Activated CD4-positive, alpha-beta memory T cell treated with anti-CD3 and anti-CD28 coated beads for 36 hours (primary cell): ENCODE measurements at regions of chr6 and their contacts with region 1.

Region 1: GRCh38 chr6:45377554-45378333 is at the start of gene SUPT3H:
- DNase-seq: peak; percentile 96
- H3K4me3 Mint-ChIP-seq: peak within 1 kb of the TSS; percentile 94
- H3K27ac Mint-ChIP-seq: peak within 1 kb of the TSS; percentile 97
- H3K4me1 Mint-ChIP-seq: peaks cover 27% of the 10 kb centered on the region
- H3K27me3 Mint-ChIP-seq: no peaks in the 10 kb centered on the region
- total RNA-seq, gene SUPT3H: 17.4 to 18.2 TPM

Region 2: DNA sequence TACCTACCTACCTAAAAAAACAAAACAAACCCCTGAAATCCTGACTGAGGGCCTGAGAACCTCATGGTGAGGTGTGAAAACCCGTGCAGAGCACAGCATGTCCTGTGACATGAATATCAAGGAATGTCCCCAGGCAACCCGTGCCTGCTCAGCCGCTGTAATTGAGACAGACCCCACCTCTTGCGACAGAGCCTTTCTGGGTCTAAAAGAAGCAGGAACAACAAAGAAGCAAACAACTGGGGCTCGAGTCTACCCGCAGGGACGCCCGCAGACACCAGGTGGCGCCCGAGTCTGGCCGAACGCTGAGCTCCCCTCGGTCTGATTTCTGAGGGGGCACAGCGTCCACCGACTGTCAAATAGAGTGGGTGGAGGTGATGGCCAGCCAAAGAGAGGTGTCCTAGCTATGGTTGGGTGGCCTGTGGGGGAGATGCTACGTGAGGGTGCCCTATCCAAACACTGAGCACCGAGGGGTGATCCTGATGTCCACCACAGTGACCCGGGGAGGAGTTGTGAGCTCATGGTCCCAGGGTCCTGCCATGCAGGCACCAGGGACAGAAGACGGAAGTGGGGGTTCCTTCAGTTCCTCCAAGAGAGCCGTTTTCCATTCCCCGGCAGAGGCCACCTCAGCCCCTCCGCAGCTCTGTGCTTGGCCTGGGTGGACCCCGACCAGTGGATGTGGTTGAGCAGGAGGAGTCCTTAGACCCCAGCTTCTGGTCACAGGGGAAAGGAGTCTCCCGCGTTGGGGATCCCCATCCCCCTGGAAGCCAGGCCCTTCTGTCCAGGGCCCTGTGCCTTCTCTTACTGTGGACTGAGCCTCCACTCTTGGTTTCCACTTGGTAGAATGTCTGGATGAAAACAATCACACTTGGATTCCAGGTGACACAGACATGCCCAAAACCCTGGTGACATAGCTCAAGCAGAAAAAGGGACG is 722.1 kb before region 1 on chr6:
- CTCF ChIA-PET with region 1: interaction called, 9 read pairs
- POLR2A ChIA-PET with region 1: no interaction called
- intact Hi-C with region 1: loop called (anchors 5 kb)
- DNase-seq: peak; percentile 85
- H3K4me3 Mint-ChIP-seq: peak overlapping the region; percentile 24
- H3K27ac Mint-ChIP-seq: peak overlapping the region; percentile 76
- H3K4me1 Mint-ChIP-seq: peaks cover 9% of the 10 kb centered on the region
- H3K27me3 Mint-ChIP-seq: no peaks in the 10 kb centered on the region

Region 3: DNA sequence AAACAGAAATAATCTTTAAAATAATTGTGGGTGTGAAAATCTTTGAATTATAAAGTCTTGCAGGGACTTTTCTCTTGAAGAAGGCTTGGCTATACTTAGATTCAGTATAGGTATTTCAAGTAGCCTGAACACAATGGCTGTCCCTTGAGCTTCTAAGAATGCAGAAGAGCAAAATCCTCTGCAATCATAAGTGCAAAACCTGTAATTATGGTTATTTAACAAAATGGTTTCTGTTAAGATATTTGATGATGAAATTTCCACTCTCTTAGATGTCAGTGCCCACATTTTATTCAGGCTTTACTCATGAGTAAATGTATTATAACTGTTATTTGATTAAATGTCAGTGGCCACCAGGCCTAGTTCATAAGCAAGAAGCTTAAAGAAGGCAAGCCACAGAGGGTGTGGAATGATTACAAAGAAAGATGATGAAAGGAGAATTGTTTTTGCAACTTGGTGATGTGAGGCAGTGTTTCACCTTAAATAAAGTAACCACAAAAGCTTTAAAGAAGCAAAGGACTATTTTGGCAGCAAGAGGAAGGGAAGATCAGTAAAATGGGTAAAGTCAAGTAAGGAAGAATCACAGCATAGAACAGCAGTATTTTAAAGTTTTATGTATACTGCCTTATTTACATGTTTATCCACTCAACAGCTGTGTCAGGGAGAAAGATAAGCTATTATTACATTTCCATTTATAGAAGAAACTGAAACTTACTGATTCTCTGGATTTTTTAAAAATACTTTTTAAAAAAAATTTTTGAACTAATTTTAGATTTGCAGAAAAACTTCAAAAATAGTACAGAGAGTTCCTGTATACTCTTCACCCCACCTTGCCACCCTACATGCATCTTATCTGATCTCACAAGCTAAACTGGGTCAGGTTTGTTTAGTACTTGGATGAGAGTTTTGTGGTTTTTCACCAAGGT is 400.8 kb before region 1 on chr6:
- CTCF ChIA-PET with region 1: no interaction called
- POLR2A ChIA-PET with region 1: interaction called, 3 read pairs
- intact Hi-C with region 1: loop called (anchors 2 kb)
- DNase-seq: no peak
- H3K4me3 Mint-ChIP-seq: no peak overlapping the region
- H3K27ac Mint-ChIP-seq: peak overlapping the region; percentile 33
- H3K4me1 Mint-ChIP-seq: peaks cover 39% of the 10 kb centered on the region
- H3K27me3 Mint-ChIP-seq: no peaks in the 10 kb centered on the region

Region 4: DNA sequence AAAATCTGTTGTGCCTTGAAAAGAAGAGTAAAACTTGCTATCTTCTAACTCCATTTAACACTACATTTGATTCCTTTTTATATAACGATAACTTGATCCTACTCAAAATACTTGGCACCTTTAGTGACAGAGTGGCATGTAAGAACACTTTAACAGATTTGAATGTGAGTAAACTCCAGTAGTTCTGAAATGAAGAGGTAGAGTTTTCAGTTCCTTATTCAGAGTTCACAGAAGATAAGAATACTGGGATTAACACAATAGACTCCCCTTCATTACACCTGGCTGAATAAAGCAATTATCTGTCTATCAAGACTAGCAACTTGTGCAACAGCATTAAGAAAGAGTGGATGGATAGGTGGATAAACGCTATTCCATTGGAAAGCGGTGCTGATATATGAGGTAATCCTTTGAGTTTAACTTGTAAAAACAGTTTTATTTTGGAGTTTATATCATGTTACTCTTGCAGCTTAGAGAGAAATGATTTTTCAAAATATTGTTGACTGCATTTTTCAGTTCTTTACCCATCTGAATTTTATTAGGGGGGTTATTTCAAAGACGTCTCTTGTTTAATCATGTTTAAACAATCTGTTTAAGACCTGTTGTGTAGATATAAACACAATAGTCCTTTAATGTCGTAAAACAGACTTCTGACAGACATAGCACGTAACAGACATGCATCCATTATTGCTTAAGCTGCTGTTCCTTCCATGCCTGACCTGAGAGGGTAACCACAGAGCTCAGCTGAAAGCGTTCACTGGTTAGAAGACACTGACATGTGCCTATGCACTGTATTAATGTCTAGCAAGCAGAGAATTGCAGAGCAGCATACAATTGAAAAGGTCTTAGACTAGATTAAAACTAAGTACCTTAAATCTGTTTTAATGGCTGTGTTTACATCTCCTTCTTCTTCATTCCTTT is 102.3 kb after region 1 on chr6:
- CTCF ChIA-PET with region 1: no interaction called
- POLR2A ChIA-PET with region 1: no interaction called
- intact Hi-C with region 1: loop called (anchors 2 kb)
- DNase-seq: no peak
- H3K4me3 Mint-ChIP-seq: no peak overlapping the region
- H3K27ac Mint-ChIP-seq: no peak overlapping the region
- H3K4me1 Mint-ChIP-seq: peaks cover 17% of the 10 kb centered on the region
- H3K27me3 Mint-ChIP-seq: no peaks in the 10 kb centered on the region